WTC11 (cell line): ENCODE measurements at regions of chr17 and their contacts with region 1.

Region 1: DNA sequence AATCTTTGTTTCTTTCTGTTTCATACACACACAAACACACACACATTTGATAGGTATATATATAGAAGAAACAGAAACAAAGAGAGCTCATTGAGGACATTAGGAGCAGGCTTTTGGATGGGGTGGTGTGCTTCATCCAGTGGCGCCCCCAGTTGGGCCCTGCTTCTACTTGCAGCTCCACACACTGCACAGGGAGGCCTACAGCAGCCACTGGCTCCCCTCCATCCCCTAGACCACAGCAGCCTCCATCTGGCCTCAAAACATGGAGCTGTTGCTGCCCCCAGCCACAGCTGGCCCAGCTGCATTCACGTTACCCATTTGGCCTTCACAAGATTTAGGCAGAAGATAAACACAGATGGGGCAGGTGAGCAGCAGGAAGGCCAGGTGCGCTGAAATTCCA is 33.1 kb upstream of the NF1 start:
- DNase-seq: peak; percentile 53
- ATAC-seq: peak; percentile 98
- H3K4me3 Mint-ChIP-seq: no peak overlapping the region
- H3K27ac Mint-ChIP-seq: no peak overlapping the region
- H3K4me1 Mint-ChIP-seq: peaks cover 10% of the 10 kb centered on the region; the same call in 1 of the 2 replicates
- H3K27me3 Mint-ChIP-seq: no peaks in the 10 kb centered on the region
- CTCF ChIP-seq: no peak

Region 2: GRCh38 chr17:31074772-31075555 is 13.3 kb after region 1 on chr17:
- CTCF ChIA-PET with region 1: interaction called, 13 read pairs
- POLR2A ChIA-PET with region 1: no interaction called
- DNase-seq: peak; percentile 53
- ATAC-seq: peak; percentile 82
- H3K4me3 Mint-ChIP-seq: no peak overlapping the region
- H3K27ac Mint-ChIP-seq: peak overlapping the region; percentile 89
- H3K4me1 Mint-ChIP-seq: peaks cover 51% of the 10 kb centered on the region
- H3K27me3 Mint-ChIP-seq: no peaks in the 10 kb centered on the region; the same call in 1 of the 2 replicates
- CTCF ChIP-seq: no peak